Naive thymus-derived CD8-positive, alpha-beta T cell (primary cell): ENCODE measurements at regions of chr11 and their contacts with region 1.

Region 1: GRCh38 chr11:16738193-16738946 is at the start of gene C11orf58:
- DNase-seq: peak; percentile 87 to 98 (median 96)
- ATAC-seq: peak; percentile 93 to 94
- H3K4me3 Mint-ChIP-seq: peak within 1 kb of the TSS in 4 of 10 donors; percentile 48 to 83 (median 65)
- H3K27ac Mint-ChIP-seq: peak within 1 kb of the TSS in 2 of 10 donors; percentile 66 to 67
- H3K4me1 Mint-ChIP-seq: peaks cover 11 to 25% (median 22%) of the 10 kb centered on the region in 4 donors
- H3K27me3 Mint-ChIP-seq: no peaks in the 10 kb centered on the region
- polyA plus RNA-seq, gene C11orf58: 169 to 181 (median 171) TPM

Region 2: GRCh38 chr11:16749666-16750065 is 11.3 kb after region 1 on chr11:
- POLR2A ChIA-PET with region 1: interaction called, 31 read pairs
- DNase-seq: no peak
- ATAC-seq: no peak
- H3K4me3 Mint-ChIP-seq: no peak overlapping the region
- H3K27ac Mint-ChIP-seq: peak overlapping the region in 3 of 10 donors; percentile 13 to 58 (median 52)
- H3K4me1 Mint-ChIP-seq: peaks cover 8 to 39% (median 32%) of the 10 kb centered on the region in 4 donors
- H3K27me3 Mint-ChIP-seq: no peaks in the 10 kb centered on the region

Region 3: DNA sequence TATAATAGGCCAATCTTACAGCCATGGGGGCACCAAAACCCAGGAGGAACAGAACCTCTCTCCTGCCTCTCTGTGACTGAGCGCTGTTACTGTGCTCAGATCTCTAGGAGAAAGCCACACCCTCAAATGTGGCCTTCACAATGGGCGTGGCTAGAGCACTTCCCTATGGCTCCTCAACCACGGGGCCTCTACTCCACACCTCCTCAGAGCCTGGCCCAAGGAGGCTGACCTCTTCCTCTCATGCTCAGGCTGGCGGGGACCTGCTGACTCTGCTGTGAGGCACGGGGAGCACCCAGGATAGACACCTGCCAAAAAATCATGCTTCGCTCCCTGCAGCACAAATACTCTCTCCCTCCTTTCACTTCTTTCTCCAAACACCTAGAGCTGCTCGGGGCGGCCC is 41.1 kb after region 1 on chr11:
- POLR2A ChIA-PET with region 1: no interaction called
- DNase-seq: no peak
- ATAC-seq: no peak
- H3K4me3 Mint-ChIP-seq: no peak overlapping the region
- H3K27ac Mint-ChIP-seq: no peak overlapping the region
- H3K4me1 Mint-ChIP-seq: peaks cover 0 to 2% (median 0%) of the 10 kb centered on the region in 4 donors
- H3K27me3 Mint-ChIP-seq: peaks cover 0 to 3% (median 0%) of the 10 kb centered on the region in 5 donors

Region 4: GRCh38 chr11:16820324-16821092 is 82.1 kb after region 1 on chr11:
- POLR2A ChIA-PET with region 1: no interaction called
- DNase-seq: peak in 8 of 10 donors; percentile 17 to 76 (median 36)
- ATAC-seq: peak; percentile 42 to 49
- H3K4me3 Mint-ChIP-seq: no peak overlapping the region
- H3K27ac Mint-ChIP-seq: peak overlapping the region in 3 of 10 donors; percentile 16 to 68 (median 46)
- H3K4me1 Mint-ChIP-seq: peaks cover 0 to 6% (median 2%) of the 10 kb centered on the region in 4 donors
- H3K27me3 Mint-ChIP-seq: peaks cover 0 to 3% (median 0%) of the 10 kb centered on the region in 5 donors

Region 5: GRCh38 chr11:16969010-16969999 is 230.9 kb after region 1 on chr11:
- POLR2A ChIA-PET with region 1: no interaction called
- DNase-seq: no peak
- ATAC-seq: no peak
- H3K4me3 Mint-ChIP-seq: no peak overlapping the region
- H3K27ac Mint-ChIP-seq: no peak overlapping the region
- H3K4me1 Mint-ChIP-seq: peaks cover 0 to 1% (median 0%) of the 10 kb centered on the region in 4 donors
- H3K27me3 Mint-ChIP-seq: no peaks in the 10 kb centered on the region